ENCODE measurements at regions of chr1 and their contacts with region 1.

Region 1: GRCh38 chr1:117735045-117735992 is 129.5 kb downstream of the TENT5C start:
- DNase-seq: peak; percentile 28
- H3K4me3 ChIP-seq: peak overlapping the region; percentile 0 to 37 (median 19)
- H3K27ac ChIP-seq: no peak overlapping the region
- H3K4me1 ChIP-seq: no peaks in the 10 kb centered on the region
- H3K27me3 ChIP-seq: no peaks in the 10 kb centered on the region
- CTCF ChIP-seq: no peak

Region 2: GRCh38 chr1:117605774-117606648 is 129.3 kb before region 1 on chr1 and contains the start of gene TENT5C:
- CTCF ChIA-PET with region 1: no interaction called
- dilution Hi-C with region 1: no loop called
- in situ Hi-C with region 1: no loop called
- intact Hi-C with region 1: loop called (anchors 1 kb)
- DNase-seq: peak; percentile 96
- H3K4me3 ChIP-seq: peak within 1 kb of the TSS; percentile 71 to 77 (median 77)
- H3K27ac ChIP-seq: peak within 1 kb of the TSS; percentile 67
- H3K4me1 ChIP-seq: peaks cover 22% of the 10 kb centered on the region
- H3K27me3 ChIP-seq: peaks cover 4% of the 10 kb centered on the region
- CTCF ChIP-seq: no peak
- total RNA-seq, gene TENT5C: 0.17 to 0.35 TPM

Region 3: DNA sequence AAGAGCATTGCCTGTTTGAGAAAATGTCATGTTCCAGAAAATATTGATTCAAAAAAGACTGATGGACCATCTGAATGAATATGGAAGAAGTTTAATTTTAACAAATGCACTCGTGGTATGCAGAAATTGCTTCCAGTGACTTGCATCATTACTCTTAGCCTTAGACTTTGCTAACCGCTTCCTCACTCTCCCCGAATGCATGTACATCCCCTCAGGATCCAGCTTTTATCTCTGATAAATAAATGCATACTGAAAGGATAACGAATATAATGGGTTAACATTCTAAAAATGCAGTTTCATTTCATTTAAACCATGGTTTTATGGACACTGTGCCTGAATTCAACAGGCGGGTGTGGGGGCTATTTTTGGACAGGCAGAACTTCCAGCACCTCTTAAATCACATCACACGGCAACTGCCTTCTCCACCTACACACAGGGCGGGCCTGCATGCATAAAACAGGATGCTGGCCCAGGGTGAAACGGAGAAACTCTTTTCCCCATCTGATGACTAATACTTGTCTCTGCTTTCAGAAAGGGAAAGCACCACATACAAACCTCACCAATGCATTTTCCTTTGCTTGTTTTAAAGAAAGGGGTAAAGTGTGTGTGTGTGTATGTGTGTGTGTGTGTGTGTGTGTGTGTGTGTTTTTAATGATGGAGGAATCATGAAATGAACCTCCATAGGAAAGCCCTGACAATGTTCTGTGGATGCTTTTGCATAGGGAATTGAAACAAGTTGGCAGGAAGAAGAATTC is 401.0 kb after region 1 on chr1:
- CTCF ChIA-PET with region 1: no interaction called
- dilution Hi-C with region 1: no loop called
- in situ Hi-C with region 1: no loop called
- intact Hi-C with region 1: no loop called
- DNase-seq: peak; percentile 86
- H3K4me3 ChIP-seq: no peak overlapping the region
- H3K27ac ChIP-seq: no peak overlapping the region
- H3K4me1 ChIP-seq: peaks cover 13% of the 10 kb centered on the region
- H3K27me3 ChIP-seq: no peaks in the 10 kb centered on the region
- CTCF ChIP-seq: no peak

Measured in mammary epithelial cell (primary cell).